GM12878 (cell line): ENCODE measurements at regions of chr17 and their contacts with region 1.

Region 1: DNA sequence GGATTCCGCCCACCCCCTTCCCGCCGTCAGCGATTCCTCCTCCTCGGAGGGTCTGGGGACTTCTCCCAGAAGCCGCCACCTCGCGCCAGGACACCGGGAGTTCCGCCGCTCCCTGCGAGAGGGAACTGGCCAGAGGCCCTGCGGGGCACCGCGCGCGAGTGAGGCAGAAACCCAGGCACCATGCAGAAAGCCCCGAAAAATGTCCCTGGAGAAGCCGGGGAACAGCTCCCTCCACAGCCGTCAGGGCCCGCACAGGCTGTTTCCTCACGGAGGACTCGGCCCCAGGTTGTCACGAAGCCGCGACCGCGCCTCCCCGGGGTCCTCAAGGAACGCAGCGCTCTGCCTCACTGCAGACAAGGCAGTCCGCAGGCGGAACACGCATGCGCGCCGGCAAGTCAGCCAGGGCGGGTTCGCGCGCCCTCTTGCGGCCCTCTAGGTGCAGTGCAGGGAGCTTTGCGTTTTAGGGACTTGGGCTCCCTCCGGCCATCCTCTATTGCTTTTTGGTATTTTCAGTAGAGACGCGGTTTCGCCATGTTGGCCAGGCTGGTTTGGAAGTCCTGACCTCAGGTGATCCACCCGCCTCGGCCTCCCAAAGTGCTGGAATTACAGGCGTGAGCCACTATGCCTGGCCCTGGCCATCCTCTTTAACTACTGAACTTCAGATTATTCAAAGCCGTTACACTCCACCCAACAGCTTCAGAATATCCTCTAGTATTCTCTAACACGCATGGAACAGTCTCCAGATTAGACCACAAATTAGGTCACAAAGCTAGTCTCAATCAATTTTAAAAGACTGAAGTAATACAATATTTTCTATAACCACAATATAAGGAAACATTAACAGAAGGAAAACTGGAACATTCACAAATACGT is 20.3 kb upstream of the ZNF287 start:
- DNase-seq: peak; percentile 28
- ATAC-seq: peak; percentile 97
- H3K4me3 ChIP-seq: peak overlapping the region; percentile 54
- H3K27ac ChIP-seq: no peak overlapping the region
- H3K4me1 ChIP-seq: no peaks in the 10 kb centered on the region
- H3K27me3 ChIP-seq: peaks cover 0 to 2% of the 10 kb centered on the region in 2 experiments; a peak in 1 of 4 replicates
- CTCF ChIP-seq: peak; percentile 95 to 99 (median 97)
- EP300 ChIP-seq: no peak
- POLR2A ChIP-seq: no peak; the same call in 1 of the 2 replicates
- RAD21 ChIP-seq: peak; percentile 79

Region 2: GRCh38 chr17:16453493-16453851 is 135.9 kb before region 1 on chr17:
- CTCF ChIA-PET with region 1: interaction called, 11 read pairs
- POLR2A ChIA-PET with region 1: no interaction called
- RAD21 ChIA-PET with region 1: no interaction called
- SMC1A ChIA-PET with region 1: no interaction called
- in situ Hi-C with region 1: no loop called
- intact Hi-C with region 1: loop called (anchors 1 kb)
- DNase-seq: no peak
- ATAC-seq: no peak
- H3K4me3 ChIP-seq: no peak overlapping the region
- H3K27ac ChIP-seq: no peak overlapping the region
- H3K4me1 ChIP-seq: peaks cover 4% of the 10 kb centered on the region; the same call in 1 of the 2 replicates
- H3K27me3 ChIP-seq: no peaks in the 10 kb centered on the region
- CTCF ChIP-seq: no peak
- EP300 ChIP-seq: no peak
- POLR2A ChIP-seq: no peak
- RAD21 ChIP-seq: no peak

Region 3: GRCh38 chr17:16537130-16537458 is 52.2 kb before region 1 on chr17:
- CTCF ChIA-PET with region 1: interaction called, 34 read pairs
- POLR2A ChIA-PET with region 1: interaction called, 5 read pairs
- RAD21 ChIA-PET with region 1: interaction called, 7 read pairs
- SMC1A ChIA-PET with region 1: interaction called, 10 read pairs
- in situ Hi-C with region 1: no loop called
- intact Hi-C with region 1: loop called (anchors 1 kb)
- DNase-seq: no peak
- ATAC-seq: no peak
- H3K4me3 ChIP-seq: no peak overlapping the region
- H3K27ac ChIP-seq: no peak overlapping the region
- H3K4me1 ChIP-seq: 0 out of 2 replicates have a peak, but pooled peaks cover 4% of the 10 kb centered on the region
- H3K27me3 ChIP-seq: no peaks in the 10 kb centered on the region
- CTCF ChIP-seq: no peak
- EP300 ChIP-seq: no peak
- POLR2A ChIP-seq: no peak
- RAD21 ChIP-seq: no peak